Sciatic nerve (tissue), 2 donors: ENCODE measurements at regions of chr1 and their contacts with region 1.

Region 1: GRCh38 chr1:153494976-153495535 is 34.6 kb upstream of the S100A7 start:
- DNase-seq: peak; percentile 91
- ATAC-seq: peak; percentile 55

Region 2: GRCh38 chr1:153352523-153352922 is 142.5 kb before region 1 on chr1:
- intact Hi-C with region 1: loop called (anchors 5 kb)
- DNase-seq: peak; percentile 82
- ATAC-seq: peak; percentile 84

Region 3: DNA sequence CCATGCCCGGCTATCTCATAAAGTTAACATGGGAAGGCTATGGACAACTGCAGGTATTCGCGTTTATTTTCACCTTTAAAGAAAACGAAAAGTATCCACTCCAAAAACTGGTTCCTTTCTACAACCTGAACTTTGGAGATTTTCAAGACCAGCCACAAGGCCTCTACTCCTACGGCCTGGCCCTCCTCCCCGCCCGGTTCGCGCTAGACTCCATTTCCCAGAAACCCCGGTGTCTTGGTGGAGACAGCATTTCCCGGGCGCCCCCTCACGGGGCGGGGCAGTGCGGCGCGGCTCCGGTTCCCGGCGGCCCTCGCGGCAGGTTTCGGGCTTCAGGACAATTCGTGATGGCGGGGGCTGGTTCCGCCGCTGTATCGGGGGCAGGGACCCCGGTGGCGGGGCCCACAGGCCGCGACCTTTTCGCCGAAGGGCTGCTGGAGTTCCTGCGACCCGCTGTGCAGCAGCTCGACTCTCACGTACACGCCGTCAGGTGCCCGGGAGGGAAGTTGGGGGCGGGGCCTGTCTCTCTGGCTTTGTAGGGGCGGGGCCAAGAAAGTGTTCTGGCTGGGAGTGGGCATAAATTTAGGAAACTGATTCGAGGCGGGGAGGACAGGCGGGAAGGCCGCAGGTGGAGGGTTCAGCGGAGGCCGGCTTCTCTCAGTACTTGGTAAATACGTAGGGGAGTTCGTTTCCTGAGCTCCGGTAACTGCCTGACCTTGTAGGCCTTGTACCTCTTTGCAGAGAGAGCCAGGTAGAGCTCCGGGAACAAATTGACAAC is 163.5 kb after region 1 on chr1 and contains the start of gene SNAPIN:
- intact Hi-C with region 1: no loop called
- DNase-seq: peak; percentile 95
- ATAC-seq: peak; percentile 98
- total RNA-seq, gene SNAPIN: 30.2 TPM